Panc1 (cell line): ENCODE measurements at regions of chr20 and their contacts with region 1.

Region 1: DNA sequence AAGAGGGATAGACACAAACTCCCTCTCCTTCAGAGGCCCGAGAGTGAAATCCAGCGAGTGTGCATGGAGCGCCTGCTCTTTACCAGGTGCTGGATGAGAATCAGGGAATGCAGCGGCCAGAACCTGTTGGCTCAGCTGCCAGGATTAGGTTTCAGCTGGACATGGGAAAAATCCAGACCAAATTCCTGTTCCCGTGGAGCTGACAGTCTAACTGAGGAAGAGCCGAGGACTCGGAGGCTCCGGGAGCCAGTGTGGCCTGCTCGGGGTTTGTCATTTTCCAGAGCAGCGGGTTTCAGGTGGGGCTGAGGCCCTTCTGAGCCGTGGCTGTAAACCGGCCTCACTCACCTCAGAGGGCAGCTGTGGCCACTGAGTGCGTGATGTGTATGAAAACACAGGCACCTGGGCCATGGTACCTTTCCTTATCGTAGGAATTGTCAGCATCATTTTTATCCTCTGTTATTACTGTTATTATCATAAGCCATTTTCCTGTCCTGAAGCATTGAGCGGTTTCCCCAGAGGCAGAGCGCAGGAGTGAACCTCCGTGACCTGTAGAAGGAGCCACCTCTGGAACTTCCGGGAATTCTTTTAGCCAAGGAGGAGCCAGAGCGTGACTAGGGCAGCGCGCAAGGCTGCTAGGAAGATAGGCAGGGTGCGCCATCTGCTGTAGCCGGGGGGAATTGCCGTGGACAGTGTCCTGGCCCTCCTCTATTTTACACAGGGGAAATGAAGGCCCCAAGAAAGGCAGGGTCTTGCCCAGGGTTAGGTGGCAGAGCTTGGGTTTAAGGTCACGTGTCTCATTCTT is 27.3 kb downstream of the PKIG start:
- DNase-seq: peak; percentile 85
- ATAC-seq: peak; percentile 96
- H3K4me3 ChIP-seq: peak overlapping the region; percentile 23 to 52
- H3K27ac ChIP-seq: peak overlapping the region; percentile 95
- H3K4me1 ChIP-seq: peaks cover 21% of the 10 kb centered on the region
- H3K27me3 ChIP-seq: no peaks in the 10 kb centered on the region
- CTCF ChIP-seq: peak; percentile 98

Region 2: DNA sequence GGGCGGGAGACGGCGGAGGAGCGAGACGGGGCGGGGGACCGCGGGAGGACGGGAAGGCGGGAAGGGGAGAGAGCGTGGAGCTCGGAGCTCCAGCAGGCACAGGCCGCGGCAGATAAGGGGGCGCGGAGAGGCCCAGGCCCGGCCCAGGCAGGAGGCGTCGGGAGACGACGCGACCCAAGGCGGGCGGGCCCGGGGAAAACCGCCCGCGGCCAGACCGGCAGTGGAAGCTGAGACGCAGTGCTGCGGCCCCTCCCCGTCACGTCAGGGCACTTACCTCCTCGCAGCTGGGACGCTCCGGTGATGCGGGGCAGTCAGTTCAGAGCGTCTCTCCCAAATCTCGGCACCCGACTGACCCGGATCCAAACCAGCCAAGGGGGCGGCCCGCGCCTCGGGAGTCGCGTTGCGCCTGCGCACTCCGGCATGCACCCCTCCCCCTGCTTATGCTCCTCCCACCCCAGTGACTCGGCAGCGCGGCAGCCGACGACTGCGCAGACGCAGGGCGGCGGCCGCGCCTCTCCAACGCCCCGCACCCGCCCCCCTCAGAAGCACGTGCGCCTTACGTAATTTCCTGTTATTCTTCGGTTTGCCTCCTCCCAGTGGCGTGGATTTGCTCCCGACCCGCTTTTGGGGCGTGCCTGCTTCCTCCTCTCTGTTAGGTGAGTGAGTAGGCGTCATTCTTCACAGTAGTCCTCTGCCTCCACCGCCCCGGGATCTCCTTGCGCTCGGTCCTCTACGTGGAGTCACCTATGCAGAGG is 399.1 kb before region 1 on chr20 and contains the start of gene OSER1:
- CTCF ChIA-PET with region 1: no interaction called
- POLR2A ChIA-PET with region 1: no interaction called
- in situ Hi-C with region 1: no loop called
- intact Hi-C with region 1: loop called (anchors 10 kb)
- DNase-seq: peak; percentile 94
- ATAC-seq: peak; percentile 94
- H3K4me3 ChIP-seq: peak within 1 kb of the TSS; percentile 74 to 100
- H3K27ac ChIP-seq: peak within 1 kb of the TSS; percentile 93
- H3K4me1 ChIP-seq: peaks cover 30% of the 10 kb centered on the region
- H3K27me3 ChIP-seq: no peaks in the 10 kb centered on the region
- CTCF ChIP-seq: no peak
- total RNA-seq, gene OSER1: 37.8 TPM

Region 3: GRCh38 chr20:44388466-44389023 is 221.2 kb before region 1 on chr20:
- CTCF ChIA-PET with region 1: interaction called, 3 read pairs
- POLR2A ChIA-PET with region 1: no interaction called
- in situ Hi-C with region 1: no loop called
- intact Hi-C with region 1: loop called (anchors 2 kb)
- DNase-seq: peak; percentile 62
- ATAC-seq: peak; percentile 86
- H3K4me3 ChIP-seq: 0 out of 4 replicates have a peak overlapping the region, but pooled peaks of 1 of the 2 experiments have one; percentile 9
- H3K27ac ChIP-seq: no peak overlapping the region
- H3K4me1 ChIP-seq: peaks cover 10% of the 10 kb centered on the region; the same call in 1 of the 2 replicates
- H3K27me3 ChIP-seq: no peaks in the 10 kb centered on the region
- CTCF ChIP-seq: peak; percentile 92

Region 4: DNA sequence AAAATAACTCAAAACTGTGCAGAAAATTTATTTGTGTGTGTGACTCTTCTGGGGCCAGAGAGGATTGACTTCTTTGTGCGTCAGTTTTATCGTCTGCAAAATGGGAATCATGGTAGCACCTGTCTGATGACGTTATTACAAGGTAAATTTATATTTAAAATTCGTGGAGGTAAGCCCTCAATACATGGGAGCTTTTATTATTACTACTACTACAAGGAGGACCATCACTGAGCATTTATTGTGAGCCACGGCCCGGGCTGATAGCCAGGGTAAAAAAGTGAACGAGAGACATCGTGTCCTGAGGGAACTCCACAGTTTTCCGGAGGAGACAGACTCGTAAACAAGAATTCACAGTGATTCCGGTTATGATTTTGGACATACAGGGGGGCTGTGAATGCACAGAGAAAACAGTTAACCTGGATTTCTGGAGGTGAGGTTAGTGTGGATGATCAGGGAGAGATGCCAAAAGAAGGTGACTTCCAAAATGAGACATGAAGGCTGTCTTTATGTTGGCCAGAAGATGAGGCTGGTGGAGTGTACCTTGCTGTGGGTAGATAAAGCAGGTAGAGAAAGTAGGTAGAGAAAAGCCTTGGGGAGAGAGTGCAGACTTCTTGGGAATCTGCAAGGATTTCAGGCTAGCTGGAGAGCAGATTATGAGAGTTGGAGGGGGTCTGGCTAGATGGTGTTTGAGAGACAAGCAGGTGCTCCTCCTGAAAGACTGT is 77.3 kb before region 1 on chr20:
- CTCF ChIA-PET with region 1: no interaction called
- POLR2A ChIA-PET with region 1: interaction called, 5 read pairs
- in situ Hi-C with region 1: no loop called
- intact Hi-C with region 1: loop called (anchors 10 kb)
- DNase-seq: no peak
- ATAC-seq: no peak
- H3K4me3 ChIP-seq: peak overlapping the region; percentile 68 to 94
- H3K27ac ChIP-seq: peak overlapping the region; percentile 88
- H3K4me1 ChIP-seq: peaks cover 13% of the 10 kb centered on the region
- H3K27me3 ChIP-seq: no peaks in the 10 kb centered on the region
- CTCF ChIP-seq: no peak

Region 5: DNA sequence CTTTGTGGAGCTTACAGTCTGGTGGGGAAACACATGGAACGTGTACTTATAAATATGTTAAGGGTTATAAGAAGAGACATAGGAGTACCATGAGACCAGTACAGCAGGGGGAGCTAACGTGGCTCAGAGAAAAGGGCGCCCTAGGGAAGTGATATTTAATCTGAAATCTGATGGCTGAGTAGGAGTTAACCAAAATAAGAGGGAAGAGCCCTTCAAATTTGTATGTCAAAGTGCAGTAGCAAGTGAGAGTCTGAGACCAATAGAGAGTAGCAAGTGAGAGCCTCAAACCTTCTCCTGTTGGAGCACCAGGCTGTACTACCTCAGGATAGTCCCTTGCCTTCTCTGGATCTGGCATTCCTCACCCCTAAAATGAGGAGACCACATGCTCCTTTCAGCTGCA is 33.4 kb before region 1 on chr20:
- CTCF ChIA-PET with region 1: interaction called, 10 read pairs
- POLR2A ChIA-PET with region 1: no interaction called
- in situ Hi-C with region 1: no loop called
- intact Hi-C with region 1: no loop called
- DNase-seq: no peak
- ATAC-seq: peak; percentile 43
- H3K4me3 ChIP-seq: no peak overlapping the region
- H3K27ac ChIP-seq: peak overlapping the region; percentile 78
- H3K4me1 ChIP-seq: peaks cover 63% of the 10 kb centered on the region
- H3K27me3 ChIP-seq: no peaks in the 10 kb centered on the region
- CTCF ChIP-seq: peak; percentile 67

Region 6: DNA sequence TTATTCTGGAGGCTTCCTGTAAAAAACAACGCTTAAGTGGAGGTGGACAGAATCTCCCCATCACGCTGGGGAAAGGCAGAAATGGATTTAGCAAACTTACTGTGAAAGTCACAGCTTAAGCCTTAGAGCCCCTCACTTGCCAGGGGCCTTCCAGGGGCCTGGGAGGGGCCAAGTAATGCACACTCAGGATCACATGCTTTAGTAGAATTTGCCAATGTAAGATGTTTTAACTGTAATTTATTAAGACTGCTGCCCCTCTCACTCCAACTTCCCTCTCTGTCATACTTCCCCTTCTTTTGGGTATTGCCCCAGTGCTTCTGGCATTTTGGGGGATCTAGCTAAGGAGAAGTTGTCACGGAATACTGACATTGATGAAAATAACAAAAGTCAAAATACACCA is 54.4 kb after region 1 on chr20:
- CTCF ChIA-PET with region 1: no interaction called
- POLR2A ChIA-PET with region 1: no interaction called
- in situ Hi-C with region 1: no loop called
- intact Hi-C with region 1: no loop called
- DNase-seq: no peak
- ATAC-seq: no peak
- H3K4me3 ChIP-seq: no peak overlapping the region
- H3K27ac ChIP-seq: no peak overlapping the region
- H3K4me1 ChIP-seq: no peaks in the 10 kb centered on the region
- H3K27me3 ChIP-seq: no peaks in the 10 kb centered on the region
- CTCF ChIP-seq: no peak

Region 7: DNA sequence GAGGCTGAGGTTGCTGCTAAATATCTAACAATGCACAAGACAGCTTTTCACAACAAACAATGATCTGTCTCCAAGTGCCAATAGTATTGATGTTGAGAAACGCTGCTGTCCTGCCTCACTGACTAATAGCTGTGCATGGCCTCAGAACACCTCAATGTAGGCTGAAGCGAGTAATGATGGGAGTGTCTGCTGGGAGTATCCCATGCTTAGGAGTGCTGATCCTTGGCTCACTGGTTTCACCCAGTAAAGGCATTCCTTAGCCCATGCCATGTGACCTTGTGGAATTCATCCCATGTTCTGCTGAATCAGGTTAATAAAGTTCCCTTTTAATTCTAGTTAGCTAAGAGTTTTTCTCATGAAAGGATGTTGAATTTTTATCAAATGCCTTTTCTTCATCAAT is 518.4 kb after region 1 on chr20:
- CTCF ChIA-PET with region 1: no interaction called
- POLR2A ChIA-PET with region 1: no interaction called
- in situ Hi-C with region 1: no loop called
- intact Hi-C with region 1: no loop called
- DNase-seq: no peak
- ATAC-seq: no peak
- H3K4me3 ChIP-seq: no peak overlapping the region
- H3K27ac ChIP-seq: no peak overlapping the region
- H3K4me1 ChIP-seq: no peaks in the 10 kb centered on the region
- H3K27me3 ChIP-seq: peaks cover 14% of the 10 kb centered on the region
- CTCF ChIP-seq: no peak